Right lobe of liver (tissue), 6 donors: ENCODE measurements at regions of chr2 and their contacts with region 1.

Region 1: DNA sequence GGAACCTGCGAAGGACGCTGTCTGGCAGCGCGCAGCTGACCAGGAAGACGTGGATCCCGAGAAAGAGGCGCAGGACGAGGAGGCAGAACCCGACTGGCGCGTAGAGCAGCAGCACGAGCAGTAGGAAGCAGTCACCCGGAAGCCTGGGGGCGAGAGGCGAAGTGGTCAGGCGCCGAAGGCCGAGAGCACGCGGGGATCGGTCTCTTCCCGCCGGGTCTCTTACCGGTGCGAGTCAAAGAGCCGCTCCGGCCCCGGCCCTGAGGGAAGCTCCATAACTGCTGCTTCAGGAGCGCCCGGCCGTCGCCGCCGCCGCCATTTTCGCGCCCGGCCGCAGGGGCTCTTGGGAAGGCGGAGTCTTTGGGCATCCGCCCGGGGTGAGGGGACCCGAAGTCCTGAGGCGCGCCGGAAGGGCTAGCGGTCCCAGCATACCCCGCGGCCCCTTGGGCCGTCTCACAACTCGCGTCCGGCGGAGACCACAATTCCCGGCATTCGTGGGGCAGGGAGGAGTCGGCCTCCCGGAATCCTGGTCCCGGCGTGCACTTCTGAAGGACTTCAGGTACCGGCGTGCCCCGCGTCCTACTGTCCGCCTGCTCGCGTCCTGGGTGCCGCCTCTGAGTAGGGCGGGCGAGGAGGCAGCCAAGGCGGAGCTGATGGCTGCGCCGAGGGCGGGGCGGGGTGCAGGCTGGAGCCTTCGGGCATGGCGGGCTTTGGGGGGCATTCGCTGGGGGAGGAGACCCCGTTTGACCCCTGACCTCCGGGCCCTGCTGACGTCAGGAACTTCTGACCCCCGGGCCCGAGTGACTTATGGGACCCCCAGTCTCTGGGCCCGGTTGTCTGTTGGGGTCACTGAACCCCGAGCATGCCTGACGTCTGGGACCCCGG is at the starts of genes AUP1 and HTRA2:
- DNase-seq: peak; percentile 99 to 100 (median 100)
- ATAC-seq: peak; percentile 93 to 96 (median 94)
- H3K4me3 ChIP-seq: peak within 1 kb of the TSS; percentile 78 to 98 (median 97)
- H3K27ac ChIP-seq: peak within 1 kb of the TSS; percentile 68 to 77 (median 76)
- H3K4me1 ChIP-seq: peaks cover 0 to 19% (median 6%) of the 10 kb centered on the region in 4 donors
- H3K27me3 ChIP-seq: no peaks in the 10 kb centered on the region
- CTCF ChIP-seq: peak in 1 of 4 donors; percentile 6
- POLR2A ChIP-seq: peak; percentile 74
- total RNA-seq, gene AUP1: 64.6 to 109 (median 80.4) TPM
- total RNA-seq, gene HTRA2: 12.3 to 20.3 (median 15.2) TPM

Region 2: GRCh38 chr2:74488644-74489481 is 40.7 kb before region 1 on chr2:
- intact Hi-C with region 1: loop called in 1 of 2 experiments (anchors 5 kb)
- DNase-seq: peak in 2 of 3 donors; percentile 71 to 87
- ATAC-seq: peak; percentile 63 to 77 (median 70)
- H3K4me3 ChIP-seq: peak overlapping the region in 2 of 3 donors; percentile 23 to 47
- H3K27ac ChIP-seq: peak overlapping the region; percentile 22 to 79 (median 73)
- H3K4me1 ChIP-seq: peaks cover 0 to 82% (median 32%) of the 10 kb centered on the region in 4 donors
- H3K27me3 ChIP-seq: no peaks in the 10 kb centered on the region
- CTCF ChIP-seq: no peak
- POLR2A ChIP-seq: no peak